Activated T-helper 1 cell treated with anti-CD3 and anti-CD28 coated beads, Interleukin-12 subunit alpha, Interleukin-12 subunit beta, Interleukin-2, Interleukin-4 antibody, amounts not matched to agents 30 ng/mL and 10 ng/mL and 1 ng/mL, durations not matched to agents 14 hours and 24 hours and 36 hours (primary cell): ENCODE measurements at regions of chr5 and their contacts with region 1.

Region 1: GRCh38 chr5:14581333-14581890 is at the start of gene OTULINL:
- DNase-seq: peak; percentile 77
- H3K4me3 Mint-ChIP-seq: peak within 1 kb of the TSS; percentile 80
- H3K27ac Mint-ChIP-seq: peak within 1 kb of the TSS; percentile 61
- H3K4me1 Mint-ChIP-seq: peaks cover 35% of the 10 kb centered on the region
- H3K27me3 Mint-ChIP-seq: peaks cover 10% of the 10 kb centered on the region
- total RNA-seq, gene OTULINL: 13.6 and 14.0 TPM in 2 replicates

Region 2: GRCh38 chr5:14142827-14143548 is 438.4 kb before region 1 on chr5 and contains the start of gene TRIO:
- intact Hi-C with region 1: loop called (anchors 5 kb)
- DNase-seq: peak; percentile 66
- H3K4me3 Mint-ChIP-seq: peak within 1 kb of the TSS; percentile 83
- H3K27ac Mint-ChIP-seq: peak within 1 kb of the TSS; percentile 72
- H3K4me1 Mint-ChIP-seq: peaks cover 14% of the 10 kb centered on the region
- H3K27me3 Mint-ChIP-seq: peaks cover 51% of the 10 kb centered on the region
- total RNA-seq, gene TRIO: 10.2 and 11.4 TPM in 2 replicates

Region 3: GRCh38 chr5:14399054-14399692 is 182.2 kb before region 1 on chr5:
- intact Hi-C with region 1: loop called (anchors 1 kb)
- DNase-seq: no peak
- H3K4me3 Mint-ChIP-seq: no peak overlapping the region
- H3K27ac Mint-ChIP-seq: no peak overlapping the region
- H3K4me1 Mint-ChIP-seq: peaks cover 13% of the 10 kb centered on the region
- H3K27me3 Mint-ChIP-seq: peaks cover 1% of the 10 kb centered on the region

Region 4: DNA sequence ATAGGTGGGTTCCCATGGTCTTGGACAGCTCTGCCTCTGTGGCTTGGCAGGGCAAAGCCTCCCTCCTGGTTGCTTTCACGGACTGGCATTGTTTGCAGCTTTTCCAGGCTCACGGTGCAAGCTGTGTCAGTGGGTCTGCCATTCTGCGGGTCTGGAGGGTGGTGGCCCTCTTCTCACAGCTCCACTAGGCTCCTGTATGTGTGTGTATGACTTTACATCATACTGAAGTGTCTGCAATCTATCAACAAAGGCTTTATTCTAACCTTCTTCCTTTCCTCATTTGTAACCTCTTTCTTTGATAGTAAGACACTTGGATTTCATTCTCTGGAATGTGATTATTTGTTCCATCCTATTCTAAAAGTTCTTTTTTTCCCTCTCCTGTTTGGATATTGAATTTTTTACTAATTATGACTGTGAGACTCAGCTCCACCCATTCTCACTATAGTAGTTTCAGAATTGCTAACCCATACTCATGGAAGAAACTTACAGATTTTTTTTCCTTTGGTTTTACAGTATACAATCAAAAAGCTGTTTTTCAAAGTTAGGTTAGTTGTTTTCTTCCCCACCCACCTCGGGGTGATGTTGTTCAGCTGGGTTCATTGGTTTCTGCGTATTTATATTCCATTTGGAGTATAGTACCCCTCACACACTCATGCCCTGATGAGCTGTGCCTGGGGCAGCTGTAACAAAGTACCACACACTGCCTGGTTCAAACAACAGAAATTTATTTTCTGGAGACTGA is 144.4 kb before region 1 on chr5:
- intact Hi-C with region 1: loop called (anchors 2 kb)
- DNase-seq: no peak
- H3K4me3 Mint-ChIP-seq: no peak overlapping the region
- H3K27ac Mint-ChIP-seq: peak overlapping the region; percentile 49
- H3K4me1 Mint-ChIP-seq: peaks cover 22% of the 10 kb centered on the region
- H3K27me3 Mint-ChIP-seq: peaks cover 6% of the 10 kb centered on the region

Region 5: DNA sequence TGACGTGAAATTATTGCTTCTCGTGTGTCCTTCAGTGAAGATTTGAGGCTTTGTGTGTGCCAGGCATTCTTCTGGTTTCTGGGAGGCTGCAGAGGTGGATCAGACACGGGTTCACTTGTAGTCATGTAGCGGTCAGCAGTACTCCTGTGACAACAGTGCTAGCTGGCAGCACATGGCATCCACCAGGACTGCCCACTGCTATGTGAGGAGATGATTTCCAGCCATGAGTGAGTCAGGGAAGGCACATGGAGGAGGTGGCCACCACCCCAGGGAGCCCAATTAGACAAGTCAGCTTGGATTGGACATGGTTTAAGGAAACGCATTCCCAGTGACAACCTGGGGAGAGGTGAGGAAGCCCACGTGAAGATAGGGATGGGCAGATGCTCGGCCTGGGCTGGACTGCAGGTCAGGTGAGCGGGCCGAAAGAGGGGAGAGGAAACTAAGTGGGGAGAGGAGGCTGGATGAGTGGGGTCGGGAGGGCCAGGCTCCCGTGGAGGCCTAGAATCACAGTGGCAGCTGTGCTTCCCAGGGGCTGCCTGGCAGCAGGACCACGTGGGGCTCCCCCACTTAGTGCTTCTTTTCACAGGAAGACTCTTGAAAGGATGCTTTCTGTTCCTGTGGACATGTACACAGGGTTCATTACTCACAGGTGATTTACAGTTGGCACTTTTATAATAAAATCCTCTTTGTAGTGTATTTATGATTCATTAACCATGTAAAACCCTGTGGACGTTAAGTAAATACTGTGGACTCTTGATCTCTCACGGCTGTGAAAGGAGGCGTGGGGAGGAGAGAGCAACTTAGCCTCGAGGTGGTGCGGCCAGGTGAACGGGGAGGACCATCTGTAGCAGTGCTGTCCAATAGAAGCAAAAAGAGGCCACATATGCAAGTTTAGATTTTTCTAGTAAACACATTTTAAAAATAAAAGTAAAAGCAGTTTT is 79.8 kb before region 1 on chr5:
- intact Hi-C with region 1: no loop called
- DNase-seq: no peak
- H3K4me3 Mint-ChIP-seq: no peak overlapping the region
- H3K27ac Mint-ChIP-seq: no peak overlapping the region
- H3K4me1 Mint-ChIP-seq: no peaks in the 10 kb centered on the region
- H3K27me3 Mint-ChIP-seq: no peaks in the 10 kb centered on the region

Region 6: GRCh38 chr5:14644623-14645237 is 63.3 kb after region 1 on chr5:
- intact Hi-C with region 1: loop called (anchors 1 kb)
- DNase-seq: no peak
- H3K4me3 Mint-ChIP-seq: no peak overlapping the region
- H3K27ac Mint-ChIP-seq: no peak overlapping the region
- H3K4me1 Mint-ChIP-seq: no peaks in the 10 kb centered on the region
- H3K27me3 Mint-ChIP-seq: peaks cover 17% of the 10 kb centered on the region

Region 7: GRCh38 chr5:15203376-15203775 is 622.0 kb after region 1 on chr5:
- intact Hi-C with region 1: no loop called
- DNase-seq: no peak
- H3K4me3 Mint-ChIP-seq: no peak overlapping the region
- H3K27ac Mint-ChIP-seq: no peak overlapping the region
- H3K4me1 Mint-ChIP-seq: no peaks in the 10 kb centered on the region
- H3K27me3 Mint-ChIP-seq: no peaks in the 10 kb centered on the region